Left ventricle myocardium inferior (tissue), 1 donor: ENCODE measurements at regions of chr4 and their contacts with region 1.

Region 1: GRCh38 chr4:124334119-124334518 is 378.4 kb downstream of the ANKRD50 start:
- DNase-seq: no peak
- H3K4me3 ChIP-seq: no peak overlapping the region
- H3K27ac ChIP-seq: no peak overlapping the region
- H3K4me1 ChIP-seq: no peaks in the 10 kb centered on the region
- H3K27me3 ChIP-seq: no peaks in the 10 kb centered on the region
- CTCF ChIP-seq: peak; percentile 73

Region 2: DNA sequence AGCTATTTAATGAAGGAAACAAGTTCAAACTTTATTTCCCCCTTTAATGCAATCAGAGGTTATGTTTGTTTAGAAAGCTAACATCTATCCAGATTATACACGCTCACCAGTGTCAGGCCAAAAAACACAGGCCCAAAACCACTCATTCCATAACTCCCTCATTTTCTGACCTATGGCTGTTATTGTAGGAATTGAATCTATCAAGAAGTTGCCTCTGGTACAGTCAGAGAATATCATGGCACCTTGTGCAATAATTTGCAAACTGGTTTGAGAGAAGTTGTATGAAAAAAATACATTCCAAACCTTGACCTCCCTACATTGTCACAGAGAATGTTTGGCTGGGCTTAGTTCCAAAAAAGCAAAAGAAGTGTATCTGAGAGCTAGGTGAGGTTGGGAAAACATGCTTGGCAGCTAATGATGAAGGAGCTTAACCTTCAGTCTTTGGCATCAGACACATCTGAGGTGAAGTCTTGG is 212.6 kb before region 1 on chr4:
- intact Hi-C with region 1: no loop called
- DNase-seq: no peak
- H3K4me3 ChIP-seq: no peak overlapping the region
- H3K27ac ChIP-seq: no peak overlapping the region
- H3K4me1 ChIP-seq: no peaks in the 10 kb centered on the region
- H3K27me3 ChIP-seq: no peaks in the 10 kb centered on the region
- CTCF ChIP-seq: no peak

Region 3: DNA sequence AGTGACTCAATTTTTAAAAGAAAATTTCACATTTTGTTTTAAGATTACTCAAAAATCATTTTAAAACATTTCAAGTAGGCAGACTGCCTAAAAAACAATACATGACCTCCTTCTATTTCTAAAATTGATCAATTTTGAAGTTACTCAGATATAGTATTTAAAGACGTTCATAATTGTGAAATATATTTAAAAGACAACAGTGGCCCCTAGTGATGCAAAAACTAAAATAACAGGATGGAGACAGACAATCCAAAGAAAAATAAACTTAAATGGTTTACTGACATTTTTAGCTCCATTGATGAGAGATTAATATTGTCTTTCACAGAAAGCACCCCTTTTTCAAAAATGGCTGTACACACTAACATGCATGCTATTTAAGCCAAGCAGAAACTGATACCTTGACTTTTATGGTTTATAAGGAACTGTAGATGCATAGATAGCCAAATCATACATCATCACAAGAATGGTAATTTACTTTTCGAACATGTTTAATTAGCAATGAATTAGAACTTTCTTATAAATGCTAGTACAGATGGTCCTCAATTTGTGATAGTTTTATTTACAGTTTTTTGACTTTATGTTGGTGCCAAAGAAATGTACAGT is 910.8 kb after region 1 on chr4:
- intact Hi-C with region 1: loop called (anchors 5 kb)
- DNase-seq: no peak
- H3K4me3 ChIP-seq: no peak overlapping the region
- H3K27ac ChIP-seq: no peak overlapping the region
- H3K4me1 ChIP-seq: no peaks in the 10 kb centered on the region
- H3K27me3 ChIP-seq: no peaks in the 10 kb centered on the region
- CTCF ChIP-seq: peak; percentile 61

Region 4: DNA sequence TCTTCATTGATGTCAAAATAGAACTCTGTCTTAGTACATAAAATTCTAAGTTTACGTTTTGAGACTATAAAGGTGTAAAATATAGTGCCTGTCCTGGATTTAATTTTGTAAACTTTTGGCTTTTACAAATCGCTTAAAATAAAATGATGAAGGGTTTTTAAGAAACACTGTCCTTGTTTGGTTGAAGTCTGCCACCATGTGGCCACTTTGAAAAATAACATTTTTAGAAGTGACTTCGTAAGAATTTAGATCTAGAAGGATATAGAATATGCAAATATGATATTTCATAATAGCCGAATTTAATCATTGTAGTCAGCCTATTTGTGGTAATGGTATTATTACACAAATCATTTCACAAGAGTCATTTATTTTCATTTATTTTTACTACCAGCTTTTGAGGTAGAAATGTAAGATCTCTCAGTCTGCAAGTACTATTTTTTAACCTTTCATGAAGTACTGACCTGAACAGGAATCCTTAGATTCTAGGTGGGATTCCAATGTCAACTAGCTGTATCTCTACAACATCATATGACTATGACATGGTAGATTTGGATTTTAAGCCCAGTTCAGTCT is 949.7 kb after region 1 on chr4:
- intact Hi-C with region 1: loop called (anchors 10 kb)
- DNase-seq: no peak
- H3K4me3 ChIP-seq: no peak overlapping the region
- H3K27ac ChIP-seq: no peak overlapping the region
- H3K4me1 ChIP-seq: no peaks in the 10 kb centered on the region
- H3K27me3 ChIP-seq: no peaks in the 10 kb centered on the region
- CTCF ChIP-seq: peak; percentile 64